Psoas muscle (tissue), 8 donors: ENCODE measurements at regions of chr3 and their contacts with region 1.

Region 1: GRCh38 chr3:62558549-62559112 is 185.3 kb upstream of the FEZF2 start:
- DNase-seq: no peak
- ATAC-seq: no peak
- H3K4me3 ChIP-seq: no peak overlapping the region
- H3K27ac ChIP-seq: no peak overlapping the region
- H3K4me1 ChIP-seq: no peaks in the 10 kb centered on the region
- H3K27me3 ChIP-seq: peaks cover 0 to 3% (median 0%) of the 10 kb centered on the region in 3 donors
- CTCF ChIP-seq: peak; percentile 6

Region 2: DNA sequence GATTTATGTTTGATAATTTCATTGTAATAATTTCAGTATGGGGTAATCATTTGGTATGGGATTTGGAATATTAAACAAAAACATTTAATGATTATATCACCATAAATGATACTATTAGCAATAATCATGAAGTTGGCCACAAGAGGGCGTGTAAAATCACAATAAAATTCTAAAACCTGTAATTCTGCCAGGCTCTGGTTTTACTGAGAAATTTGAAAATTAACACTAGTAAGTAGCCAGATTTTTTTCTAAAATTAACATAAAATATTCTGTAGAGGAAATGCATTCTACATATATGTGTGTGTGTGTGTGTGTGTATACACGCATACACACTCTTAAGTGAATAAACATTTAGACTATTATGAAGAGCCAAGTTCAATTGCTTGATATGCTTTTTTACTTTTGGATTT is 225.8 kb before region 1 on chr3:
- intact Hi-C with region 1: loop called in 1 of 2 experiments (anchors 10 kb)
- DNase-seq: no peak
- ATAC-seq: no peak
- H3K4me3 ChIP-seq: no peak overlapping the region
- H3K27ac ChIP-seq: no peak overlapping the region
- H3K4me1 ChIP-seq: no peaks in the 10 kb centered on the region
- H3K27me3 ChIP-seq: peaks cover 0 to 2% (median 0%) of the 10 kb centered on the region in 3 donors
- CTCF ChIP-seq: peak; percentile 50

Region 3: GRCh38 chr3:62462104-62462762 is 96.4 kb before region 1 on chr3:
- intact Hi-C with region 1: no loop called
- DNase-seq: no peak
- ATAC-seq: no peak
- H3K4me3 ChIP-seq: no peak overlapping the region
- H3K27ac ChIP-seq: no peak overlapping the region
- H3K4me1 ChIP-seq: no peaks in the 10 kb centered on the region
- H3K27me3 ChIP-seq: peaks cover 0 to 4% (median 2%) of the 10 kb centered on the region in 3 donors
- CTCF ChIP-seq: no peak